ENCODE measurements at regions of chr5 and their contacts with region 1.

Region 1: GRCh38 chr5:17374973-17375884 is 122.8 kb upstream of the TAF11L2 start:
- DNase-seq: no peak
- H3K4me3 ChIP-seq: no peak overlapping the region
- H3K27ac ChIP-seq: no peak overlapping the region
- H3K4me1 ChIP-seq: peaks cover 18% of the 10 kb centered on the region
- CTCF ChIP-seq: no peak

Region 2: GRCh38 chr5:17452936-17453335 is 77.7 kb after region 1 on chr5:
- CTCF ChIA-PET with region 1: no interaction called
- POLR2A ChIA-PET with region 1: no interaction called
- intact Hi-C with region 1: loop called (anchors 5 kb)
- DNase-seq: no peak
- H3K4me3 ChIP-seq: no peak overlapping the region
- H3K27ac ChIP-seq: no peak overlapping the region
- H3K4me1 ChIP-seq: no peaks in the 10 kb centered on the region
- CTCF ChIP-seq: no peak

Measured in OCI-LY7 (cell line).